ENCODE measurements at regions of chr9 and their contacts with region 1.

Region 1: DNA sequence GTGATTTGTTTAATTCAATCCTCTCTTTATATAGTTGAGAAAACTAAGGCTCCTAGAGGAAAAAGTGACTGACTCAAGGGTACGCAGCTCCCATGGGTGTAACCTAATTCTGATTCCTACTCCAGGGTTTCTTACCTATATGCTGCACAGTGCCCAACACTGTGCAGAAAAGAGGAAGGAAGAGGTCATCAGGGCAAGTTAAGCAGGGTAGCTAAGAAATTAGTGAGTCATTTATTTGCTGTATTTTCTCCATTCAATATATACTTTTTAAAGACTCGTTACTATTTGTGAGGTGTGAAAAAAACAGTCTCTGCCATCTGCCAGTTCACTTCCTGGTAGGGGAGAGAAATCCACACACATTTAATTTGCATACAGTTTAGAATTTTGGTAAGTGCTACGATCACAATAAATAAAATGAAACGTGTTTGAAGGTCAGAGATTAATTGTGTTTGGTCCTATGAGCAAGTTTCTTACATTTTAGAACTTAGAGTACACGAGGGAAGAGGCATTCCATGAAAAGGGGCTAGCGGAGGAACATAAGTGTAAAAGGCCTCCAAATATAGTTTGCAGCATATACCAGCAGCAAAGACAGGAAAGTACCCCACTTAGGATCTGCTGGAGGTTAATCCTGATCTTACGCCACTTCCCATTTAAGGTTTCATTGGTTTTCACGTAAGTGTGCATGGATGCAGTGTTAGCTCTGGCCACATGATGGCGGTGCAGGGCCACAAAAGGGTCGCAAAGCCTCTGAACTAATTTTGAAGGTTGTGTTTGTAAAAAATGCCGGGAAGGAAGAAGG is 59.9 kb upstream of the TLR4 start:
- DNase-seq: peak; percentile 82
- ATAC-seq: peak; percentile 89

Region 2: DNA sequence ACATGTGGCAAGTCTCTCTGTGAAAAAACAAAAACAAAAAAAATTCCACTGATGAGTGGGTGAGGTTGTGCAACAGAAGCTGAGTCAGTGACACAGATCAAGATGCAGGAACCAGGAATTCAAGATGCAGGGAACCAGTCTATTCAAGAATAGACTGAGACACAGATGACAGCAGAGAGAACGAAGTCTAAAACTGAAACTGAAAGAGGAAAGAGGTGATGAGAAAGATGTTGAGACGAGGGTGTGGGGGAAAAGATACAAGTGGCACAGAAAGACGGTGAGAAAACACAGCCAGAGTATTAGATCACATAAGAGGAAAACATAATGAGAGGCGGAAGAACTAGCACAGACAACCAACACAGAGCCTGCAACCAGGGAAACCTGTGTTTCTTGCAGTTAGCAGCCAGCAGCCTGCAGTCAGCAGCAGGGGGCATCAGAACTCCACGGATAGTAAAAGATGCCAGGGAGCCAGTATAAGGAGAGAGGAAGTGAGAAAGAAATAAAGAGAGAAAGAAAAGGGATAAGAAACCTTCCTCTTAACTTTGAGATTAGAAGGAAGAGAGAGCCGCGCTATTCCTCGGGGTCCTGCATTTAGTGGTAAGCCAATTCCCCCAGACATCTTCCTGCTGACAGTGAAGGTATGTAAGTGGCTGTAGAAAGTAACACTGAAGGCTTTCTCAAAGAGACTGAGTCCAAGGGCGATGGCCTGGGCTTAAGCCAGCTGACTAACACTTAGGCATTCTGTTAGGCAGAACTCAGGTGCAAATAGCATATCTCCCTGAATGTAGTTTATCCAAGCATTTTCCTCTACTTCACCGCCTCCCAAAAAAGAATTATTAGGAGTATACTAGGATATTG is 138.8 kb after region 1 on chr9:
- intact Hi-C with region 1: loop called (anchors 10 kb)
- DNase-seq: peak; percentile 79
- ATAC-seq: peak; percentile 94